CD4-positive, alpha-beta T cell (primary cell): ENCODE measurements at regions of chr1 and their contacts with region 1.

Region 1: DNA sequence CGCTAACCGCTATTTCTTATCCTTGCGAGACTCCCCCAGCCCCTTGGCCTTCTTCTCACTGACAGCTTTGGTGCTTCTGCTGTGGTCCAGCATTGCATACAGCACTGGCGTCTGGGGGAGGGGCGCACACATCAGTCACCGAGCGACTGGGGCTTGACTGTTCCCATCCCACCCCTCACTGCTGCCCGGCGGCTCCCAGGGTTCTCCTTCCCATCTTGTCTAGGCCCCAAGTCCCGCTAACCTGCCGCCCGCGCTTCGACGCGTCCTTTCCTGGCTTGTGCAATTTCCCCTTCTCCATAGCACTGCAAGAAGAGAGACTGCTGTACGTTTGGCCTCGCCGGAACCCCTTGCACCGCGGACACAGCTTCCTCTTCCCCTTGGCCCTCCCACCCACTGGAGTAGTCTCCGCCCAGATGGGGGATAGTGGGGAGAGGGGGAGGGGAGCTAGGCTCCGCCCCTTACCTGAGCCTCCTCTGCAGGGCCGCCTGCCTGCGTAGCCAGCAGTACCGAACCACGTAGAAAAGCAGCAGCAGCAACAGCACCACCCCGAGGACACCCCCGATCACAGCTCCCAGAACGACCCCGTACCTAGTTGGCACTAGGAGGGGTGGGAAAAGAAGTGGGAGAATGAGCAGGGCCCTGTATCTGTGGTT is 3.8 kb downstream of the MPZ start:
- DNase-seq: peak; percentile 75 to 97 (median 88)
- ATAC-seq: peak; percentile 98
- H3K4me3 ChIP-seq: peak overlapping the region; percentile 92
- H3K4me3 Mint-ChIP-seq: peak overlapping the region; percentile 94
- H3K27ac ChIP-seq: peak overlapping the region; percentile 51 to 71
- H3K27ac Mint-ChIP-seq: peak overlapping the region; percentile 90
- H3K4me1 ChIP-seq: peaks cover 26% of the 10 kb centered on the region
- H3K4me1 Mint-ChIP-seq: peaks cover 44% of the 10 kb centered on the region
- H3K27me3 ChIP-seq: no peaks in the 10 kb centered on the region
- H3K27me3 Mint-ChIP-seq: no peaks in the 10 kb centered on the region
- CTCF ChIP-seq: peak; percentile 59

Region 2: DNA sequence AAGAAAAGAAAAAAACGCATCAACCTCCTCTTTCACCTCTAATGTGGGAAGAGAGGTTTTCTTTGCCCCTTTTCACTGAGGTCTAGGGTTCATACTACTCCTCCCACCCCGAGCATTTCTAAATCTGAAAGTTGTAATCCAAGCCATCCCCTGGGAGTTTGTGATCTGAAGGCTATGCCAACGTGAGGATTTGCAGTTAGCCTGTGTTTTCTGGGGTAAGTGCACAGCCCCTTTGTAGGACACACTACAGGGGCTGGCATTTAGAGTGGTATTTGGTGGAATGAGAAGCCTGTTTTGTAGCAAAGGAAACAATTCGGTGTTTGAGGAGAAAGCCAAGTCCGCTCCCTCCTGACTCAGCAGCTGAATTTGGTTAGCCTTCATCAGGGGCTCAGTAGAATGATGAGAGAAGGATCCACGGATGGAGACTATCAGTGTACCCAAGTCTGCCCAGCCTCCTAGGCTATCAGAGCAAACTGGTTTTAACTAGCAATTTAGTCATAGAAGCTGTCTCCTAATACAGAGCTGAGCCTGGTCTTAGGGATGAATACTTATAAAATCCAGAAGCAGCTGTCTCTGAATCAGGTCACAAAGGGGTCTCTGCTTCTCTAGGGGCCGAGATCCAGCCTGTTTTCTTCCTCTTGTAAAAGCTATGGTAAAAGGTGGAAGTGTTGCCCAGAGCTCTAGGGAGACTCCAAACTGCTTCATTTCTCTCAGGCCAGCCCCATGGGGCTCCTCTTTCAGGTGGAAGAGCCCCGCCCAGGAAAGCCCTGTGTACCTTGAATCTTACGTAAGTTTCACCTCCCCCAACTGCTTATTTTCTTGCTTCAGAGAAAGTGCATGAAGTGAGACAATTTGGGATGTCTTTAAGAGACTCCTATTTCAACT is 45.4 kb before region 1 on chr1:
- CTCF ChIA-PET with region 1: no interaction called
- POLR2A ChIA-PET with region 1: no interaction called
- intact Hi-C with region 1: loop called in 1 of 2 experiments (anchors 1 kb)
- DNase-seq: no peak
- ATAC-seq: no peak
- H3K4me3 ChIP-seq: no peak overlapping the region
- H3K4me3 Mint-ChIP-seq: no peak overlapping the region
- H3K27ac ChIP-seq: no peak overlapping the region
- H3K27ac Mint-ChIP-seq: no peak overlapping the region
- H3K4me1 ChIP-seq: peaks cover 17% of the 10 kb centered on the region
- H3K4me1 Mint-ChIP-seq: peaks cover 5% of the 10 kb centered on the region
- H3K27me3 ChIP-seq: peaks cover 44 to 49% of the 10 kb centered on the region in 2 experiments
- H3K27me3 Mint-ChIP-seq: peaks cover 74% of the 10 kb centered on the region
- CTCF ChIP-seq: no peak

Region 3: GRCh38 chr1:161290779-161291178 is 15.2 kb before region 1 on chr1:
- CTCF ChIA-PET with region 1: interaction called, 11 read pairs
- POLR2A ChIA-PET with region 1: interaction called, 3 read pairs
- intact Hi-C with region 1: no loop called
- DNase-seq: no peak
- ATAC-seq: no peak
- H3K4me3 ChIP-seq: no peak overlapping the region
- H3K4me3 Mint-ChIP-seq: no peak overlapping the region
- H3K27ac ChIP-seq: no peak overlapping the region
- H3K27ac Mint-ChIP-seq: no peak overlapping the region
- H3K4me1 ChIP-seq: no peaks in the 10 kb centered on the region
- H3K4me1 Mint-ChIP-seq: peaks cover 5% of the 10 kb centered on the region
- H3K27me3 ChIP-seq: no peaks in the 10 kb centered on the region
- H3K27me3 Mint-ChIP-seq: no peaks in the 10 kb centered on the region
- CTCF ChIP-seq: no peak

Region 4: DNA sequence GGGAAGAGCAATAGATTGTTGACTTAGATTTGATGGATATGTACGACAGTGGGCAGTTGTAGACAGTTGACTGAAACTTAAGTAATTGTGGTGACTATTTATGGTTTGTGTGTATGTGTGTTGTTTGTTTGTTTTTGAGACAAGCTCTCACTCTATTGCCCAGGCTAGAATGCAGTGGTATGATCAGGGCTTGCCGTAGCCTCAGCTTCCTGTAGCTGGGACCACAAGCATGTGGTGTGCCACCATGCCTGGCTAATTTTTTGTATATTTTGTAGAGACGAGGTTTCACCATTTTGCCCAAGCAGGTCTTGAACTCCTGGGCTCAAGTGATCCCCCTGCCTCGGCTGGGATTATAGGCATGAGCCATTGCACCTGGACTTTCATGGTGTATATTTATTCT is 18.0 kb after region 1 on chr1:
- CTCF ChIA-PET with region 1: interaction called, 10 read pairs
- POLR2A ChIA-PET with region 1: no interaction called
- intact Hi-C with region 1: no loop called
- DNase-seq: peak in 2 of 14 experiments; percentile 31 to 51
- ATAC-seq: no peak
- H3K4me3 ChIP-seq: no peak overlapping the region
- H3K4me3 Mint-ChIP-seq: no peak overlapping the region
- H3K27ac ChIP-seq: no peak overlapping the region
- H3K27ac Mint-ChIP-seq: no peak overlapping the region
- H3K4me1 ChIP-seq: peaks cover 5% of the 10 kb centered on the region
- H3K4me1 Mint-ChIP-seq: peaks cover 11% of the 10 kb centered on the region
- H3K27me3 ChIP-seq: no peaks in the 10 kb centered on the region
- H3K27me3 Mint-ChIP-seq: no peaks in the 10 kb centered on the region
- CTCF ChIP-seq: no peak